PC-3 (cell line): ENCODE measurements at regions of chr5 and their contacts with region 1.

Region 1: DNA sequence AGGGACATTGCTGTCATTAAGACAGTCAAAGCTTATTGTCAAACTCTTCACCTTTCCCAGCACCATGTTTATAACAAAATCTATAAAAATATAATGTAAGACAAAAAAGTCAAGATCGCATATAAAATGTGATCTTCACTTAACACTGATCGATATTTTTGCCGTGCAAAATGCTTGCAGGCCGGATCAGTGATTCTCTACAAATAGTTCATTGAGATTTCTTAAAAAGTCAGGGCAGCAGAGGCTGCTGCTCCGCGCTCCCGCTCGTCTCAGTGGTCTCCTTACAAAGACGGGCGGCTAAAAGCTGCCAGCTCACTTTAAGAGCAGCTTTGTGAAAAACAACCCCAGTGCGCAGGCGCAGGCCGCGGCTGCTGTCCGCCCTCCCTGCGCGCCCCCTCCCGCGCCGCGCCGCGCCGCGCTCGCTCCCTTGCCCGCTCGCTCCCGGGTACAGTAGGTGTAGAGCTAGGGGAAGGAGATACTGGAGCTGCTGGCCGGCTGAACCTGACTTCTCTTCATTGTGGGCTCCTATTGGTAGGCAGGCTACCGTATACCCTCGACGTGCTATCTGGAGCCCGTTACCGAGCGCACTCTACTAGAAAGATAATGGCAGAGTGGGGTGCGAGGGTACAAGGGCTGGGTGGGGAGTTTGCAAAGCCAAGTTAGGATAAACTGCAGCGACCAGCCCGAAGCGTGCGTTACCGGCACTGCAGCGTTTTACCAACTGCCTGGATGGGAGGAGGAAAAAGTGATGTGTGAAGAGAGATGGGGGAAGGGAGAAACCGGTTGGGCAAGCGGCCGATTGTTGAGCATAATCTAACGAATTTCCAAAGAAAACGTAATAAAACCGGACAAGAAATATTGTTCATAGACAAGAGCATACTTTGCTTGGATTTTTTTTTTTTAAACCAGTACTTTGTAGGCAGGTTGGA is at the start of gene ARRDC3:
- DNase-seq: peak; percentile 98
- ATAC-seq: peak; percentile 48
- H3K4me3 ChIP-seq: peak within 1 kb of the TSS; percentile 85
- H3K27ac ChIP-seq: peak within 1 kb of the TSS; percentile 90
- H3K4me1 ChIP-seq: peaks cover 15% of the 10 kb centered on the region
- H3K27me3 ChIP-seq: no peaks in the 10 kb centered on the region
- CTCF ChIP-seq: no peak
- total RNA-seq, gene ARRDC3: 39.5 and 40.3 TPM in 2 replicates

Region 2: GRCh38 chr5:90571147-90571773 is 812.0 kb before region 1 on chr5:
- CTCF ChIA-PET with region 1: no interaction called
- POLR2A ChIA-PET with region 1: no interaction called
- intact Hi-C with region 1: no loop called
- DNase-seq: peak; percentile 86
- ATAC-seq: peak; percentile 96
- H3K4me3 ChIP-seq: no peak overlapping the region
- H3K27ac ChIP-seq: peak overlapping the region; percentile 68
- H3K4me1 ChIP-seq: peaks cover 26% of the 10 kb centered on the region
- H3K27me3 ChIP-seq: no peaks in the 10 kb centered on the region
- CTCF ChIP-seq: no peak

Region 3: GRCh38 chr5:90888511-90889324 is 494.6 kb before region 1 on chr5:
- CTCF ChIA-PET with region 1: no interaction called
- POLR2A ChIA-PET with region 1: interaction called, 12 read pairs
- intact Hi-C with region 1: no loop called
- DNase-seq: peak; percentile 93
- ATAC-seq: peak; percentile 77
- H3K4me3 ChIP-seq: peak overlapping the region; percentile 41
- H3K27ac ChIP-seq: peak overlapping the region; percentile 98
- H3K4me1 ChIP-seq: peaks cover 67% of the 10 kb centered on the region
- H3K27me3 ChIP-seq: no peaks in the 10 kb centered on the region
- CTCF ChIP-seq: no peak

Region 4: GRCh38 chr5:91101600-91102379 is 281.5 kb before region 1 on chr5:
- CTCF ChIA-PET with region 1: no interaction called
- POLR2A ChIA-PET with region 1: no interaction called
- intact Hi-C with region 1: loop called (anchors 1 kb)
- DNase-seq: peak; percentile 83
- ATAC-seq: peak; percentile 99
- H3K4me3 ChIP-seq: peak overlapping the region; percentile 30; the same call in 1 of the 2 replicates
- H3K27ac ChIP-seq: no peak overlapping the region
- H3K4me1 ChIP-seq: 0 out of 2 replicates have a peak, but pooled peaks cover 5% of the 10 kb centered on the region
- H3K27me3 ChIP-seq: no peaks in the 10 kb centered on the region
- CTCF ChIP-seq: peak; percentile 94

Region 5: DNA sequence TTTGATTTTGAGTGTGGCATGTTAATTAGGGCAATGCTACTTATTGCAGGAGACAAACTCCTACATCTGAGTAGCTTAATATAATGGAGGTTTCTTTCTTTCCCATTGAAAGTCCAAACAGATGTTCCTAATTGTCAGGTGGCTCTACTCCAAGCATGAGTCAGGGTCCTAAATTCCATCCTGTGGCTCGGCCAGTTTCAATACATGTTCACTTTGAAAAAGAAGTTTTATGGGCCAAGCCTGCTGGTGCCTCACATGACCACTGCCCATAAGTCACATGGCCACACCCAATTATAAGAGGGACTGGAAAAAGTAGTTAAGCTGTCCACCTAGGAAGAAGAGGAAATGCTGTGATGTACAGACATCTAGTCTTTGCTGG is 170.6 kb before region 1 on chr5:
- CTCF ChIA-PET with region 1: no interaction called
- POLR2A ChIA-PET with region 1: no interaction called
- intact Hi-C with region 1: no loop called
- DNase-seq: peak; percentile 76
- ATAC-seq: peak; percentile 85
- H3K4me3 ChIP-seq: no peak overlapping the region
- H3K27ac ChIP-seq: peak overlapping the region; percentile 70
- H3K4me1 ChIP-seq: peaks cover 13% of the 10 kb centered on the region
- H3K27me3 ChIP-seq: no peaks in the 10 kb centered on the region
- CTCF ChIP-seq: no peak

Region 6: GRCh38 chr5:91225848-91226686 is 157.2 kb before region 1 on chr5:
- CTCF ChIA-PET with region 1: interaction called, 8 read pairs
- POLR2A ChIA-PET with region 1: interaction called, 3 read pairs
- intact Hi-C with region 1: loop called (anchors 1 kb)
- DNase-seq: peak; percentile 66
- ATAC-seq: peak; percentile 78
- H3K4me3 ChIP-seq: no peak overlapping the region
- H3K27ac ChIP-seq: no peak overlapping the region
- H3K4me1 ChIP-seq: no peaks in the 10 kb centered on the region
- H3K27me3 ChIP-seq: no peaks in the 10 kb centered on the region
- CTCF ChIP-seq: peak; percentile 77

Region 7: DNA sequence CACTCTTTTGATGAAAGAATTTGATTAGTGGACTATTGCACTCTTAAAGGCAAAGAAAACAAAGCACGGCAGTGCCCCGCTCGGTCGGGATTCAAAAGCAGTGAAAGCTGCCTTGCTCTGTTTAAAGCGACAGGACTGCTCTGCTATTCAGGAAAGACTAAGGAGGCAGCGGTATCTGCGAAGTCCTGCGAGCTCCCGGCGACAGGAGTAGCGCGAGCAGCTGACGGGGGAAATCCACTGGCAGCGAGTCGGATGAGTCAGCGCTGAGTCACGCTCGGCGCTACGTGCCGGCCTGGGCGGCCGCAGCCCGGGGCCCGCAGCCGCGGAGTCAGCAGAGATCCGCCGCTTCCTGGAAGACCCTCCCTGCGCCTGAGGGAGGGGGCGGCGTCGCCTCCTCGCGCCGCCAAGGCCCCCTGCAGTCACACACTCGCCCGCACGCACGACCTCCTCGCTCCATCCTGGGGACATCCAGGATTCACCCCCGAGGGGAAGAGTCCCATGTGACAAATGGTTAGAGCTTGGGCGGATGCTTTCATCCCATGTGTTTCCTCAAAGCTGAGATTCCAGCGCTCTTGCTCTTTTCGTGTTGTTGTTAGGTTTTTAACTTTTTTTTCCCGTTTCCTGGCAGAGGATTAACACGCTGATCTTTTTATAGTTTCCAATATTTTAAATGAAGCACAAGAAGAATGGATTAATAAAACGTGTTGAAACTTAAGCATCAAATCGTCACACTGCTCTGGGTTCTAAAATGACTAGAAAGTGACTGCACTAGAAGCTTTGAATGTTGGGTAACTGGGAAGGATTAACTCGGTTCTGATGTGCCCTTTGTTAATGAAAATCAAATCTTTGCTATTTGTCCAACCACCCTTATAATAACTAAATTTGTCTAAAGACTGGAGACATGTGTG is 102.7 kb before region 1 on chr5:
- CTCF ChIA-PET with region 1: interaction called, 3 read pairs
- POLR2A ChIA-PET with region 1: interaction called, 49 read pairs
- intact Hi-C with region 1: loop called (anchors 1 kb)
- DNase-seq: peak; percentile 97
- ATAC-seq: peak; percentile 84
- H3K4me3 ChIP-seq: peak overlapping the region; percentile 64
- H3K27ac ChIP-seq: peak overlapping the region; percentile 99
- H3K4me1 ChIP-seq: peaks cover 40% of the 10 kb centered on the region
- H3K27me3 ChIP-seq: no peaks in the 10 kb centered on the region
- CTCF ChIP-seq: no peak

Region 8: DNA sequence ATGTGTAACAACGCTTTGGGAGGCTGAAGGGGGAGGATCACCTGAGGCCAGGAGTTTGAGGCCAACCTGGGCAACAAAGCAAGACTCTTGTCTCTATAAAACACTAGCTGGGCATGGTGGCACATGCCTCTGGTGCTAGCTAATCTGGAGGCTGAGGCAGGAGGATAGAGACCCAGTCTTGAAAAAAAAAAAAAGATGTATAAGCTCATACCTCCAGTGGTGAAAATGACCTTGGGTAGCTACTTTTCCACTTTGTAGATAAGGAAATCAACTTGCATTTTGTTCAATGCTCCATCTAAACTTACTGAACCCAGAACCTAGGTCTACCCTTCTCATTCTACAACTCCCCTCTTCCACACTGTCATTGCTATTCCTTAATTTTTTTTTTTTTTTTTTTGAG is 16.7 kb before region 1 on chr5:
- CTCF ChIA-PET with region 1: no interaction called
- POLR2A ChIA-PET with region 1: interaction called, 24 read pairs
- intact Hi-C with region 1: no loop called
- DNase-seq: no peak
- ATAC-seq: no peak
- H3K4me3 ChIP-seq: no peak overlapping the region
- H3K27ac ChIP-seq: no peak overlapping the region
- H3K4me1 ChIP-seq: no peaks in the 10 kb centered on the region
- H3K27me3 ChIP-seq: no peaks in the 10 kb centered on the region
- CTCF ChIP-seq: no peak